Spleen (tissue), 13 donors: ENCODE measurements at regions of chr5 and their contacts with region 1.

Region 1: DNA sequence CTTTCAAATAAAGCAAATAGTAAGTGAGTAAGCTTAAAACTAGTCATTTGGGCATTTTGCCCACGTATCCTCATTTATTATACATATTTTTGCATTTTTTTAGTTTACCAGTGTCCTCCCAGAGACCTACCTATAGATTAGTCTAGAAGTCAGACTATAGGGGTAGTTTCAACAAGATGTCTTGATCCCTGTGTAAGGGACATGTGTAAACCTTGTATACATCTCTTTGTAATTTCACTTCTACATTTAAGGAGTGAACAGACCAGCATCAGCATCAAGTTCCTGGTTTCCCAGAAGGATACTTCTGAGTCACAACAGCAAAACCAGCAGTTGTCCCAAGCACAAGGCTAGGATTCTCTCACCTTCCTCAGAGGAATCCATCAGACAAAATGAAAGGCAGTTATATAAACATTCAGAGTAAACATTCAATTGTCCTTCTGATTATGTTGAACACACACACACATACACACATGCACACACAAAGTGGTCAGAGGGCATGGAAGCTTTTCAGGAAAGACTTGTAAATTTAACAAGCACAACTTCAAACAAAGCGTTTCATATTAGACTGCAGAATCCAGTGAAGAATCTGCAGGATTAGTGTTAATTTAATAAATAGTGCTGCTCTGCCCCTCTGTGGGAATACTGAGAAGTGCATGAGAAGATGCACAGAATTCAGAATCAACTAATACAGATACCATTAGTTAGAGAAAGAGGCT is 55.4 kb downstream of the HINT1 start:
- DNase-seq: no peak
- H3K4me3 ChIP-seq: no peak overlapping the region
- H3K27ac ChIP-seq: no peak overlapping the region
- H3K4me1 ChIP-seq: peaks cover 0 to 9% (median under 1%) of the 10 kb centered on the region in 6 donors
- H3K27me3 ChIP-seq: no peaks in the 10 kb centered on the region
- CTCF ChIP-seq: peak; percentile 59 to 82 (median 70)
- POLR2A ChIP-seq: no peak

Region 2: DNA sequence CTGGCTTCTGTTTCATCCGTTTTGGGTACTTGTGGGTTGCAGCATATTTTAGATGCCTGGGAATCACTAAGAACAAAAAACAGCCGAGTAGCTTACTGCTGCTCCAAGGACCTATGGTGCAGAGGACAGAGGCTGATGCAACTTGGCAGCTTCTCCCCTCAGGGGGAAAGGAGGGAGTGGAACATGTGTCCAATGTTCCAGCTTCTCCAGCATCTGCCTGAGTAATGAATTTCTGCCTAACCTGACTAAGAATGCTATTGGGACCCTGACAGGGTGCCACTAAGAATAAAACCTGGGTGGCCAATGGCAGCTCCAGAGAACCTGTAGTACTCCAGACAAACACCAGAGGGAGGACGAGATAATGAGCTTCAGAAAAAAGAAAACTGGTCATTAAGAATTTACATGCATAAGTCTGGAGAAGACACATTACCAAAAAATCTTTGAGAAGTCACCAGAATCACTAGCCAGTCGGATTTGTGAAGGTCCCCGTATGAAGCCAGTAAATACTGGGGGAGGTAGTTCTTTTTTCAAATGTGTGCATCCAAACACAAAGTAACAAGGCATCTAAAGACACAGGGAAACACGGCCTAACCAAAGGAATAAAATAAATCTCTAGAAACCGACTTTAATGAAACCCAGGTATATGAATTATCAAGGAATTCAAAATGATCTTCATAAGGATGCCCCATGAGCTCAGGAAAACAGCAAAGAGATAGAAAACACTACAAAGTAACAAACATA is 238.2 kb before region 1 on chr5:
- intact Hi-C with region 1: loop called (anchors 10 kb)
- DNase-seq: no peak
- H3K4me3 ChIP-seq: no peak overlapping the region
- H3K27ac ChIP-seq: no peak overlapping the region
- H3K4me1 ChIP-seq: no peaks in the 10 kb centered on the region
- H3K27me3 ChIP-seq: no peaks in the 10 kb centered on the region
- CTCF ChIP-seq: peak; percentile 39 to 79 (median 58)
- POLR2A ChIP-seq: no peak

Region 3: DNA sequence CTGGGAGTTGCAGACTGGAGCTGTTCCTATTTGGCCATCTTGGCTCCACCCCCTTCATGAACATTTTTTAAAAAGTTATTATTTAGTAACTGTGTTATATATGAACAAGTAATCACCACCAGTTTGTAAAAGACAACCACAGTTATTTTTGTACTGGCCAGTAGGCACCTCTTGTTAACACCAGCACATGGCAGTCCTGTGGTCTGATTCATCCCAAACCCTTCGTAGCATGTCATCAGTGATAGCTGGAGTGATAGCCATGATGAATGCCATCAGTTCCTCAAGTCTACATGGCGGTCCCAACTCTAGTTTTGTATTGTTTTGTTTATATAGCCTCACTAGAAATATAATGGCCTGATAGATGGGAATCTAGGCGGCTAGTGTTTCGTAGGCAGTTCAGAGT is 228.4 kb after region 1 on chr5:
- intact Hi-C with region 1: no loop called
- DNase-seq: no peak
- H3K4me3 ChIP-seq: no peak overlapping the region
- H3K27ac ChIP-seq: no peak overlapping the region
- H3K4me1 ChIP-seq: peaks cover 0 to 59% (median 9%) of the 10 kb centered on the region in 6 donors
- H3K27me3 ChIP-seq: no peaks in the 10 kb centered on the region
- CTCF ChIP-seq: no peak
- POLR2A ChIP-seq: no peak

Region 4: GRCh38 chr5:131357739-131358561 is 248.3 kb after region 1 on chr5:
- intact Hi-C with region 1: no loop called
- DNase-seq: no peak
- H3K4me3 ChIP-seq: no peak overlapping the region
- H3K27ac ChIP-seq: peak overlapping the region; percentile 0 to 74 (median 54)
- H3K4me1 ChIP-seq: peaks cover 28 to 94% (median 52%) of the 10 kb centered on the region in 6 donors
- H3K27me3 ChIP-seq: no peaks in the 10 kb centered on the region
- CTCF ChIP-seq: no peak
- POLR2A ChIP-seq: no peak

Region 5: GRCh38 chr5:131533836-131534235 is 424.1 kb after region 1 on chr5:
- intact Hi-C with region 1: no loop called
- DNase-seq: no peak
- H3K4me3 ChIP-seq: no peak overlapping the region
- H3K27ac ChIP-seq: no peak overlapping the region
- H3K4me1 ChIP-seq: peaks cover 10 to 100% (median 49%) of the 10 kb centered on the region in 6 donors
- H3K27me3 ChIP-seq: no peaks in the 10 kb centered on the region
- CTCF ChIP-seq: peak in 1 of 11 experiments; percentile 12
- POLR2A ChIP-seq: no peak